Ascending aorta (tissue), 2 donors: ENCODE measurements at regions of chr17 and their contacts with region 1.

Region 1: DNA sequence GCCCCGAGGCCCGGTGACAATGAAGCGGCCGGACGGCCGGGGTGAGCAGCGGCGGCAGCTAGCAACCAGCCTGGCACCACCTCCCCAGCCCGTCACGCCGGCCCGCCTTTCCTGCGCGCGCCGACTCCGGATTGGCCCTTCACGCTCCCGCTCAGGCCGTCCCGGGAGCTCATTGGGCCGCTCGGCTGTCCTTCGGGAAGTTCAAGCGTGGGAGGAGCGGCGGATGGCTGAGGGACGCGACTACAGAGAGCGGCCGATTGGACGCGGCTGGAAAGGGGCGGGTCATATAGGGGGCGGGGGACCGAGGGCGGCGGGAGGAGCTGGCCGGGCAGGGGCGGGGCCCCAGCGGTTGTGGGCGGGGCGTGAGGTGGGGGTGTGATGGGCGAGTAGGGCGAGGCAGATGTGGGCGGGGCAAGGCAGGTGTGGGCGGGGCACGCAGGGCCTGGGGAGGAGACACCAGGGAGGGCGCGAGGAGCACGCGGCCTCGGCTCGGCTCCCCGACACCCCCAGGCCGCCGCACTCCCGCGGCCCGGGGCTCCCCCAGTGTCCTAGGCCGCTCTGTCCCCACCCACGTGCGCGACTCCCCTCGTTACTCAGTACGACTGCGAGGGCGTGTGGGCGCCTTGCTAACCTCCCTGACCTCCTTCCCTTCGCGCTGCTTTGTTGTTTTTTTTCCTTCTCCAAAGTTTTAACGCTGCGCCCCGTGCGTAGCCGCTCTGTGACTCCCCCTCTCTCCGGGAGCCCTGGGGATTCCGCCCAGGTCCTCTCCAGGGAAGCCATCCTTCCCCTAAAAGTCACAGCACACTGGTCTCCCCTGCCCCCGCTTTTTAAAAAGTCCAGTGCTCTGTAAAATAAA is at the start of gene CEP131:
- DNase-seq: peak; percentile 96 to 99
- H3K4me3 ChIP-seq: peak within 1 kb of the TSS; percentile 79 to 87
- H3K27ac ChIP-seq: peak within 1 kb of the TSS in 1 of 2 donors; percentile 46
- H3K4me1 ChIP-seq: peaks cover 0 to 17% of the 10 kb centered on the region in 2 donors
- H3K27me3 ChIP-seq: no peaks in the 10 kb centered on the region
- CTCF ChIP-seq: no peak
- total RNA-seq, gene CEP131: 6.7 TPM

Region 2: GRCh38 chr17:79741751-79742588 is 1481.2 kb before region 1 on chr17:
- intact Hi-C with region 1: no loop called
- DNase-seq: peak in 1 of 2 donors; percentile 79
- H3K4me3 ChIP-seq: peak overlapping the region in 1 of 2 donors; percentile 9
- H3K27ac ChIP-seq: no peak overlapping the region
- H3K4me1 ChIP-seq: peaks cover 0 to 6% of the 10 kb centered on the region in 2 donors
- H3K27me3 ChIP-seq: peaks cover 12% of the 10 kb centered on the region
- CTCF ChIP-seq: peak; percentile 80 to 99 (median 97)

Region 3: GRCh38 chr17:81238817-81239600 is 15.9 kb after region 1 on chr17 and contains the starts of genes NDUFAF8 and TEPSIN:
- intact Hi-C with region 1: loop called (anchors 1 kb)
- DNase-seq: peak; percentile 94 to 99
- H3K4me3 ChIP-seq: peak within 1 kb of the TSS; percentile 88 to 95
- H3K27ac ChIP-seq: peak within 1 kb of the TSS; percentile 66 to 84
- H3K4me1 ChIP-seq: peaks cover 6 to 23% of the 10 kb centered on the region in 2 donors
- H3K27me3 ChIP-seq: no peaks in the 10 kb centered on the region
- CTCF ChIP-seq: no peak
- total RNA-seq, gene NDUFAF8: 6.5 TPM
- total RNA-seq, gene TEPSIN: 117 TPM

Region 4: GRCh38 chr17:81322271-81323082 is 99.3 kb after region 1 on chr17:
- intact Hi-C with region 1: no loop called
- DNase-seq: no peak
- H3K4me3 ChIP-seq: no peak overlapping the region
- H3K27ac ChIP-seq: no peak overlapping the region
- H3K4me1 ChIP-seq: no peaks in the 10 kb centered on the region
- H3K27me3 ChIP-seq: no peaks in the 10 kb centered on the region
- CTCF ChIP-seq: peak in 1 of 3 experiments; percentile 7